ENCODE measurements at regions of chr12 and their contacts with region 1.

Region 1: DNA sequence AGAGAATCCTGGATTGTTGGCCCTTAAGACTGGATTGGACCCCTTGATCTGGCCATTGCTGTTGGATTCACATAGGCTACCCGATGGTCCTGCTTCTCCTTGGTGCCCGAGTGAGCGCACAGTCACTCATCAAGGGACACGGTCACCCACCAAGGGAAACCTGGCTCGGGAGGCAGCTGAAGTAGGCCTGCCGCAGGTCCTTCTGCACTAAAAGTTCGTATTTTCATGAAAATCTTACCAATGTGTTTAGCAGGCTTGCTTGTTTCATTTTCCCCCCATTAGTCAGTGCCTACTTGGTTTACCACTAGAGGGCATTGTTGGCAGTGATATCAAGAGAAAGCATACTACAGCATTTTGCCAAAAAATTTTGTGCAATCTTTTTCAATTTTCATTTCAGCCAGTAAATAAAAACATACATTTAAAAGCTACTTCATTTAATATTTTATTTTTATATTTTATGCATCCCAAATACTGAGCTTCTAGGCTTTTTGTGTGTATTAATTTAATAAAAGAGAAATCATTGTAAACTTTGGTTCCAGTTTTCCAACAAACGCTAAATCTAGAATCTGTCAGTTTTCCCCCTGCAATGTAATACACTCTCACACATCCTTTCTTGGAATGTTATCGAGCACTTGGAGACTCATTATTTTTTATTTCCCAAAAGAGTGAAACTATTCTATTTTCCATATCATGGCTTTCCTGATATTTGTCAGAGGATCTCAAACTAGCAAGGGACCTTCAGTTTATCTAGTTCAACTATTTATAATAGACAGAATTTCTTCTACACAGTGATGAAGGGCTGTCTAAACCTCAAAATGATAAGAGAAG is 116.7 kb downstream of the LMNTD1 start:
- DNase-seq: peak in 1 of 5 donors; percentile 29
- ATAC-seq: peak in 3 of 4 donors; percentile 63 to 78 (median 70)
- H3K4me3 ChIP-seq: peak overlapping the region in 9 of 12 donors; percentile 30 to 48 (median 35)
- H3K27ac ChIP-seq: no peak overlapping the region
- H3K4me1 ChIP-seq: peaks cover 0 to 12% (median 0%) of the 10 kb centered on the region in 12 donors
- H3K27me3 ChIP-seq: no peaks in the 10 kb centered on the region
- CTCF ChIP-seq: peak; percentile 74 to 88 (median 79)
- POLR2A ChIP-seq: no peak

Region 2: GRCh38 chr12:25469861-25470260 is 33.4 kb after region 1 on chr12:
- intact Hi-C with region 1: no loop called
- DNase-seq: no peak
- ATAC-seq: no peak
- H3K4me3 ChIP-seq: no peak overlapping the region
- H3K27ac ChIP-seq: no peak overlapping the region
- H3K4me1 ChIP-seq: no peaks in the 10 kb centered on the region
- H3K27me3 ChIP-seq: no peaks in the 10 kb centered on the region
- CTCF ChIP-seq: no peak
- POLR2A ChIP-seq: no peak

Region 3: GRCh38 chr12:25557830-25558436 is 121.5 kb after region 1 on chr12:
- intact Hi-C with region 1: no loop called
- DNase-seq: no peak
- ATAC-seq: no peak
- H3K4me3 ChIP-seq: no peak overlapping the region
- H3K27ac ChIP-seq: no peak overlapping the region
- H3K4me1 ChIP-seq: no peaks in the 10 kb centered on the region
- H3K27me3 ChIP-seq: no peaks in the 10 kb centered on the region
- CTCF ChIP-seq: peak in 11 of 12 donors; percentile 8 to 47 (median 24)
- POLR2A ChIP-seq: no peak

Region 4: DNA sequence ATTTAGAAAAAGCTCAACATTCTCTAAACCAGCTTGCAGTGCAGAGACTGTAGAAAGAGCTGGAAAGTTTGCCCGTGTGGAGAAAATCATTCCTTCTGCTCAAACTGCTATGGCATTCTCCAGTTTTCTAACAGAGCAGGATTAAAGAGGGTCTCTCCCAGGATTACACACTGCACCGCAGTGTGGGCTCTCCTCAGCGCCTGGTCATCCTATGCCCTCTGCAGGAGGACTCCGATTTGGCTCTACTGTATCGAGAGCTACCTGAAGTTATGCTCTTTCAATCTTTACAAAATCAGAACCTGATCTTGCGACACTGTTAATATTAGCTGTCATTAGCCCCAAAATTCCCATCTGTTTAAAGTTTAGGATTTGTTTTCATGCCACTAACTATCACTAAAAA is 655.4 kb after region 1 on chr12:
- intact Hi-C with region 1: loop called in 2 of 10 experiments (anchors 5 to 10 kb)
- DNase-seq: no peak
- ATAC-seq: peak in 2 of 4 donors; percentile 58
- H3K4me3 ChIP-seq: no peak overlapping the region
- H3K27ac ChIP-seq: no peak overlapping the region
- H3K4me1 ChIP-seq: no peaks in the 10 kb centered on the region
- H3K27me3 ChIP-seq: no peaks in the 10 kb centered on the region
- CTCF ChIP-seq: peak in 6 of 12 donors; percentile 14 to 40 (median 25)
- POLR2A ChIP-seq: no peak

Region 5: DNA sequence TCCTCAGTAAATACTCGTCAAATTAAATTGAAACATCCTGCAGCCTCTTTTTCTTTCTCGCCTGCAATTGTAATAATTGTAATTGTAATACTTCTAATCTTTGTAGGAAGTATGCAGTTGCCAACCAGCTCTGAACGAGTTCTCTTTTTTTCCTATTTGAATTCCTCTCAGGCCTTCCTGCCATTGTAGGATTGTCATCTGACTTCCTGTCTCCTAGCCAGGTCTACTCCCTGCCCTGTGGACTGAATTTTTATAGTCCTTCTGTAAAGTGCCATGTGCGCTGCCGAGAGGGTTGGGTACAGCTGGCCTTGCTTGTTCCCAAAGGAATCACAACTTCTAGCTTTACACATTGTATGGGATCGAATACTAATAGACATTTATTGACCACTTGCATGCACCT is 942.3 kb after region 1 on chr12:
- intact Hi-C with region 1: no loop called
- DNase-seq: peak in 1 of 5 donors; percentile 29
- ATAC-seq: peak in 3 of 4 donors; percentile 78 to 92 (median 81)
- H3K4me3 ChIP-seq: no peak overlapping the region
- H3K27ac ChIP-seq: peak overlapping the region in 1 of 12 donors; percentile 33
- H3K4me1 ChIP-seq: peaks cover 0 to 20% (median 11%) of the 10 kb centered on the region in 12 donors
- H3K27me3 ChIP-seq: no peaks in the 10 kb centered on the region
- CTCF ChIP-seq: no peak
- POLR2A ChIP-seq: no peak

Region 6: GRCh38 chr12:26701604-26702215 is 1265.3 kb after region 1 on chr12:
- intact Hi-C with region 1: loop called in 1 of 10 experiments (anchors 5 kb)
- DNase-seq: no peak
- ATAC-seq: no peak
- H3K4me3 ChIP-seq: no peak overlapping the region
- H3K27ac ChIP-seq: no peak overlapping the region
- H3K4me1 ChIP-seq: peaks cover 0 to 31% (median 12%) of the 10 kb centered on the region in 12 donors
- H3K27me3 ChIP-seq: no peaks in the 10 kb centered on the region
- CTCF ChIP-seq: peak; percentile 50 to 74 (median 64)
- POLR2A ChIP-seq: no peak